Activated T-helper 1 cell treated with anti-CD3 and anti-CD28 coated beads, Interleukin-12 subunit alpha, Interleukin-12 subunit beta, Interleukin-2, Interleukin-4 antibody, amounts not matched to agents 30 ng/mL and 10 ng/mL and 1 ng/mL, durations not matched to agents 14 hours and 24 hours and 36 hours (primary cell): ENCODE measurements at regions of chr6 and their contacts with region 1.

Region 1: DNA sequence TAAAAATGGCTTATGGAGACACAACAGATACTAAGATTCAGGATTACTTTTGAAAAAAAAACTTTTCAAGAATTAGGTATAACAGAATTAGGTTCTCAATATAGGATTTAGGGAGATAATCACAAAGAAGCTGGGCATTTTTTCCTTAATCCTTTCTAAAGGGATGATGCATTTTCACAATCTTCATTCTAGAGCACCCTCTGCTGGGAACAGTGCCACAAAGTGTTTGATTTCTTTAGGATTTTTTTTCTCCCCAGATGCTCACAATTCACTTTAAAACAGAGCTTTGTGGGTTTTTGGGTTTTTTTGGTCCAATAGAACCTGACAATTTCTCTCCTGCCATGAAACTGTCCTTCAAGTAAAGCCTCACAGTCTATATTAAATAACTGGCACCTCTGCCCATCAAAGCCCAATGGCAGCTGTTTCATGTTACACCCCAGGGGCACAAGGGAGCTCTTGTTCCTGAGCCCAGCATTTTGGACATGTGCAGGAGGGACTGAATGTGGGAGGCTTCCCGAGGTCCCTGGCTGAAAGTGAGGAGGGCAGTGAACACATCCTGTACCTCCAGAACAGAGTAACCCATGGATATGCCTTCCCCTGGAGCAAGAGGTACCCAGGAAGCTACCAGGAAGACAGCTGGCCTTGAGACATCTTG is 39.7 kb downstream of the PREP start:
- DNase-seq: no peak
- H3K4me3 Mint-ChIP-seq: no peak overlapping the region
- H3K27ac Mint-ChIP-seq: no peak overlapping the region
- H3K4me1 Mint-ChIP-seq: peaks cover 17% of the 10 kb centered on the region
- H3K27me3 Mint-ChIP-seq: no peaks in the 10 kb centered on the region

Region 2: DNA sequence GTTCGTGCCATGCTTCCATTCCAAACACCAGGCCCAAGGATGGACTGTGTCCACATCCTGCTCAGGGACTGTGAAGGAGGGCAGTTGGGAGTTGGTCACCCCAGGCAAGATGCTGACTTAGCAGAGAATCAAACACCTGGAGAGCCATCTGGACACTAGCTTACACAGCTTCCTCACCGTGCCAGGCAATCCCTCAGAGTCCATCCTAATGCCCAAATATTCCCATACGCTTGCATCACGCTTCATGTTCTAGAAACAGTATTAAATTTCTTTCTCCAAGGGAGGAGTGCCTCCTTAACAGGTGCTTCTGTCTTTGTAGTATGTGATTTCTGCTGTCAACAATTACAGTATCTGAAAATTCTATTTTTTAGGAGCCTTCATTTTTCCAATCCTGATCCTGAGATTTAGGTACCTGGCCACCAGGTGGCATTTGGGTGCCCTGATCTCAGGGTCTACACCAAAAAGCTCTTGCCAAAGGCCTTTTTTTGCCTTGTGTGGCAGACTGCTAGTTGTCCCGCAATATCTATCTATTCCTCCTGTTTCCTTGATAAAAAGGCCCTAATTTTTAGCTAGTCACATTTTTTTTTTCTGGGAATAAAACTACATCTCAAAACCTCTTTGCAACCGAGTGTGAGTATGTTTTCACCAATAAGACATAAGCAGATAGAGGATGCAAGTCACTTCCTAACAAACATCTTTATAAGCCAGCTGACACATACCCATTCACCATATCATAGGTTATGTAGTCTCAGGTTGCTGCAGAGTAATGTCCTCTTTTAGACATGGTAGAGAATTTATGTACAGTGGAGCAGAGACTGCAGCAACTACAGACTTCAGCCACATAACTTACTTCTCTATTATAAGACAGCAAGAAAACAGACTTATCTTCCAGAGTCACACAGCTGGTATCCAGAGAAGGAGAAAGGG is 45.4 kb before region 1 on chr6:
- intact Hi-C with region 1: loop called (anchors 1 kb)
- DNase-seq: no peak
- H3K4me3 Mint-ChIP-seq: no peak overlapping the region
- H3K27ac Mint-ChIP-seq: no peak overlapping the region
- H3K4me1 Mint-ChIP-seq: no peaks in the 10 kb centered on the region
- H3K27me3 Mint-ChIP-seq: no peaks in the 10 kb centered on the region

Region 3: DNA sequence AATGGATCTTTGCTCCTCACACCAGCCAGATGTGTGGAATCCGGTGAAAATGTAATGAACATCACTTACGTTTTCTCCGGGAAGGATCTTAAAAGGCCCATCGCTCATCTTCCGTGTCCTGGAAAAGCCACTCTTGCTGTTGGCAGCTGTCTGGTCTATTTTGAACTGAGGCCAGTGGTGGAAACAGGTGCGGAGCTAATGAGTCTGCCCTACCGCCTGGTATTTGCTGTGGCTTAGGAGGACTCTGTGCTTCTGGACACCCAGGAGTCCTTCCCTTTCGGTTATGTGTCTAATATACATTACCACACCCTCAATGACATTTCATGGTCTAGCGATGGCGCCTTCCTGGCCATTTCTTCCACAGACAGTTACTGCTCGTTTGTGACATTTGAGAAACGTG is 303.8 kb after region 1 on chr6:
- intact Hi-C with region 1: no loop called
- DNase-seq: no peak
- H3K4me3 Mint-ChIP-seq: no peak overlapping the region
- H3K27ac Mint-ChIP-seq: no peak overlapping the region
- H3K4me1 Mint-ChIP-seq: peaks cover 6% of the 10 kb centered on the region
- H3K27me3 Mint-ChIP-seq: peaks cover 8% of the 10 kb centered on the region